CD8-positive, alpha-beta T cell (primary cell): ENCODE measurements at regions of chr12 and their contacts with region 1.

Region 1: GRCh38 chr12:642633-643474 is 20.4 kb downstream of the NINJ2 start:
- DNase-seq: peak; percentile 39 to 91 (median 77)
- ATAC-seq: peak; percentile 75
- H3K4me3 ChIP-seq: peak overlapping the region; percentile 62 to 70
- H3K4me3 Mint-ChIP-seq: peak overlapping the region; percentile 89
- H3K27ac ChIP-seq: peak overlapping the region; percentile 72 to 88
- H3K27ac Mint-ChIP-seq: peak overlapping the region; percentile 97
- H3K4me1 ChIP-seq: peaks cover 36% of the 10 kb centered on the region
- H3K4me1 Mint-ChIP-seq: peaks cover 54% of the 10 kb centered on the region
- H3K27me3 ChIP-seq: no peaks in the 10 kb centered on the region
- H3K27me3 Mint-ChIP-seq: no peaks in the 10 kb centered on the region
- CTCF ChIP-seq: peak; percentile 34

Region 2: GRCh38 chr12:674272-674781 is 31.5 kb after region 1 on chr12:
- CTCF ChIA-PET with region 1: no interaction called
- POLR2A ChIA-PET with region 1: interaction called, 6 read pairs
- intact Hi-C with region 1: loop called in 1 of 2 experiments (anchors 2 kb)
- DNase-seq: peak; percentile 21 to 92 (median 66)
- ATAC-seq: peak; percentile 93
- H3K4me3 ChIP-seq: no peak overlapping the region
- H3K4me3 Mint-ChIP-seq: peak overlapping the region; percentile 76
- H3K27ac ChIP-seq: peak overlapping the region; percentile 5 to 92
- H3K27ac Mint-ChIP-seq: peak overlapping the region; percentile 90
- H3K4me1 ChIP-seq: peaks cover 36% of the 10 kb centered on the region
- H3K4me1 Mint-ChIP-seq: peaks cover 52% of the 10 kb centered on the region
- H3K27me3 ChIP-seq: no peaks in the 10 kb centered on the region
- H3K27me3 Mint-ChIP-seq: no peaks in the 10 kb centered on the region
- CTCF ChIP-seq: no peak

Region 3: GRCh38 chr12:1073652-1074051 is 430.8 kb after region 1 on chr12:
- CTCF ChIA-PET with region 1: no interaction called
- POLR2A ChIA-PET with region 1: no interaction called
- intact Hi-C with region 1: no loop called
- DNase-seq: no peak
- ATAC-seq: no peak
- H3K4me3 ChIP-seq: no peak overlapping the region
- H3K4me3 Mint-ChIP-seq: no peak overlapping the region
- H3K27ac ChIP-seq: no peak overlapping the region
- H3K27ac Mint-ChIP-seq: no peak overlapping the region
- H3K4me1 ChIP-seq: no peaks in the 10 kb centered on the region
- H3K4me1 Mint-ChIP-seq: peaks cover 20% of the 10 kb centered on the region
- H3K27me3 ChIP-seq: no peaks in the 10 kb centered on the region
- H3K27me3 Mint-ChIP-seq: no peaks in the 10 kb centered on the region
- CTCF ChIP-seq: no peak